Left cardiac atrium (tissue), 4 donors: ENCODE measurements at regions of chr12 and their contacts with region 1.

Region 1: DNA sequence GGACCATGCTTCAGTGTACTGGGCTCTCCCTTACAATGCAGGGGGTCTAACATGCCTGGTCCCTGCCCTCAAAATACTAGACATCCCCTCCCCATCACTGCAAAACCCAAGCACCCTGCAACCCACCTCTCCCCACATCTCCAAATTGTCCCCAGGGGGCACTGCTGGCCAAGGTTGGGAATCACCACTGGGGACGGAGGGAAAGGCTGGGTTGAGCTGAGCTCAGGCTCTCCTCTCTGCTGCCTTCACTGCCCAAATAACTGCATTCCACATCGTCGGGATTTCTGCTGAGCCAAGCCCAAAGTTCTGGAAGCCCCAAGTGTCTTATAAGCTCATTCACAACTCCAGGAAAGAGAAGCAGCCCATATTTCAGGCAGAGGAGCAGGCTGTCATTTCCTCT is 69.6 kb downstream of the NT5DC3 start:
- DNase-seq: peak; percentile 33
- ATAC-seq: peak; percentile 59 to 66

Region 2: DNA sequence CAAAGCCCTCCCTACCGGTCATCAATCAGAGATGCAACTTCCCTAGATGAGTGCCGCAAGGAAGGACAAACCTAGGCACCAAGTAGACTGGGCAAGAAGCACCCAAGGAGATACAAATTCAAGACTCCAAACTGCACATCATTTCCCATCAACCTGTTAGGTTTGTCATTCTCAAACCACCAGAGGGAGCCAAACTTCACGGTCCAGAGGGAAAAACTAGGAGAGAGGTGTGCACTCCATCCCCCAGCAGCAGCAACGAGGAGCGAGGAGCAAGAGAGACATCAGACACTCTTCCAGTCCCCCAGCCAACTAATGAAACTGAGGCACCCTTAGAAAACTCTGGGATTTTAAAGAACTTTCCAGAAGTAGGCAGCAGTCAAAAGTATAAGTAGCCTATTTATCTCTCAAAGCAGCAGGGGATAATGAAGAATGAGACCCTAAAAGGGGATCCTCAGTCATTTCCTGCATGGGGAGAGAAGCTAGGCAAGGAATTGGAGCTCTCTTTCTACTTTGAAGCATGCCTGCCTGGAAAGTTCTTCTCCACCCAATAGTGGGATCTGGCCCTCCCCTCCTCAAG is 106.6 kb after region 1 on chr12:
- intact Hi-C with region 1: loop called in 1 of 2 experiments (anchors 10 kb)
- DNase-seq: peak; percentile 50
- ATAC-seq: peak; percentile 57 to 86

Region 3: GRCh38 chr12:103956516-103957027 is 185.1 kb after region 1 on chr12:
- intact Hi-C with region 1: no loop called
- DNase-seq: no peak
- ATAC-seq: peak; percentile 53 to 69